Lower leg skin (tissue), 4 donors: ENCODE measurements at regions of chr14 and their contacts with region 1.

Region 1: GRCh38 chr14:94439453-94440057 is 13.0 kb downstream of the SERPINA11 start:
- DNase-seq: no peak
- H3K4me3 ChIP-seq: no peak overlapping the region
- CTCF ChIP-seq: no peak
- POLR2A ChIP-seq: no peak

Region 2: GRCh38 chr14:94485944-94486841 is 46.6 kb after region 1 on chr14:
- intact Hi-C with region 1: loop called (anchors 5 kb)
- DNase-seq: peak in 1 of 2 donors; percentile 39
- H3K4me3 ChIP-seq: no peak overlapping the region
- CTCF ChIP-seq: peak in 2 of 3 donors; percentile 33 to 89
- POLR2A ChIP-seq: no peak

Region 3: DNA sequence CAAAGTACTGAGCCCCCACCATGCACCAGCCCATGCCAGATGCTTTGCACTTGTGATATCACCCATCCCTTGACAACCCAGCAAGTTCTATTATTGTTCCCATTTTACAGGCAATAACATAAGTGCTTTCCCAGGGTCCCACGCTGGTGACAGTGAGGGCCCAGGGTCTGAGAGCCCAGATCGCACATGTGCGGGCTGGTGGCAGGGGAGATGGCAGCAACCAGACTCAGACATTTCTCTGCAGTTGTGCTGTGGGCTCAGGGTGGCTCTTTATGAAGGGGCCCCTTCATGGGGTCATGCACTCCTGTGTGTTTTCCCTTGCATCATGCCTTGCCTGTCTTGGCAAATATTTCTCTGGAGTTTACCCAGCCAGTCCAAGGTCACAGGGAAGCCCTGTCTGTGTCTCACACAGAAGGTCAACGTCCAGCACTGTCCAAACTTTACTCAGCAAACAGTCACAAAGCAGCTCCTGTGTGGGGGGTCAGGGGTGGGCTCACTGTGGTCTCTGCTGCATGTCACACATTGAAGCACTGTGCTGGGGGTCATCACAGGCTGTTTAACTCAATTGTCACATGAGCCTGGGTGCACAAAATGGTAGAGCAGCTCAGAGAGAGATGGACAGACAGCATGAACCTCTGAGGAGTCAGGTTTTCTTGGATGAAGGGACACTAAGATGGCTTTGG is 154.3 kb after region 1 on chr14:
- intact Hi-C with region 1: no loop called
- DNase-seq: no peak
- H3K4me3 ChIP-seq: no peak overlapping the region
- CTCF ChIP-seq: peak in 1 of 3 donors; percentile 100
- POLR2A ChIP-seq: no peak